GM12878 (cell line): ENCODE measurements at regions of chr5 and their contacts with region 1.

Region 1: GRCh38 chr5:9681706-9682105 is 51.6 kb upstream of the TAS2R1 start:
- DNase-seq: no peak
- ATAC-seq: no peak
- H3K4me3 ChIP-seq: no peak overlapping the region
- H3K27ac ChIP-seq: no peak overlapping the region
- H3K4me1 ChIP-seq: no peaks in the 10 kb centered on the region
- H3K27me3 ChIP-seq: no peaks in the 10 kb centered on the region
- CTCF ChIP-seq: no peak
- EP300 ChIP-seq: no peak
- POLR2A ChIP-seq: no peak
- RAD21 ChIP-seq: no peak

Region 2: DNA sequence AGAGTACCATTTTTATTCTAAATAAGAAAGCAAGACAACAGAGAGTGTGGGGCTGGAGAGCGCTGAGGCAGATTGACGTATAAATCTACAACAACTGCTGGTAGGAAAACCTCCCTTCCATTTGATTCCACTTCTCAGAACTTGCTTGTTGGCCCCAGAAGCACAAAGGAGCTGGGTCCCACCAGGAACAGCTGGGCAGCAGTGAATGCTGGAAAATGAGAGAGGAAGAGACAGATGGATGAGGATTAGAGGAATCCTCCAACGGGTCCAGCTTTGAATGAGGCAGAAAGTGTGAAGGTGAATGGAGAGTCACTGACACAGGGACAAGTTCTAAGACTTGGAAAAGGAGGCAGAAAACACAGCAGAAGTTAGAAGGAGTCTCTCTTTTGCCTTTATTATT is 66.4 kb before region 1 on chr5:
- CTCF ChIA-PET with region 1: no interaction called
- POLR2A ChIA-PET with region 1: no interaction called
- RAD21 ChIA-PET with region 1: no interaction called
- SMC1A ChIA-PET with region 1: no interaction called
- in situ Hi-C with region 1: no loop called
- intact Hi-C with region 1: loop called (anchors 2 kb)
- DNase-seq: no peak
- ATAC-seq: no peak
- H3K4me3 ChIP-seq: no peak overlapping the region
- H3K27ac ChIP-seq: no peak overlapping the region
- H3K4me1 ChIP-seq: no peaks in the 10 kb centered on the region
- H3K27me3 ChIP-seq: no peaks in the 10 kb centered on the region; a peak in 1 of 4 replicates
- CTCF ChIP-seq: no peak
- EP300 ChIP-seq: no peak
- POLR2A ChIP-seq: no peak
- RAD21 ChIP-seq: no peak